ENCODE measurements at regions of chr12 and their contacts with region 1.

Region 1: GRCh38 chr12:55720894-55721444 is 776 bp downstream of the RDH5 start:
- DNase-seq: peak; percentile 95
- H3K4me3 ChIP-seq: peak overlapping the region in 3 of 4 donors; percentile 9 to 31 (median 22)
- H3K27ac ChIP-seq: peak overlapping the region; percentile 100
- H3K4me1 ChIP-seq: peaks cover 0 to 91% (median 90%) of the 10 kb centered on the region in 4 donors
- H3K27me3 ChIP-seq: no peaks in the 10 kb centered on the region
- CTCF ChIP-seq: peak in 3 of 4 experiments; percentile 48 to 64 (median 52)
- EP300 ChIP-seq: no peak
- POLR2A ChIP-seq: no peak

Region 2: DNA sequence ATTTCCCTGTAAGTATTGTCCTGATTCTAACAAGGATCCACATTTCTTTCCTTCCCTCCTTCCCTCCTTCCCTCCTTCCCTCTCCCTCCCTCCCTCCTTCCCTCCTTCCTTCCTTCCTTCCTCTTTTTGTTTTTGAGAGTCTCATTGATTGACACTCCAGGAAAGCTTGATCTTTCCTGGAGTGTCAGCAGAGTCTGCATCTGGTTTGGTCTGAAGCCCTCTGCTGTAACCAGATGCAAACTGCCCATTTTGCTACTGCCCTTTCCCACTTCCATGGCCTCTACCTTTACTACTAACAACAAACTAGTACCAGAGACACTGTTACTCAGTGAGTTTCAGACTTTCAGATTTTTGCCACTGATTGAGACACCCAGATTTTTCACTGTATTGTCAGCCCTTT is 335.1 kb before region 1 on chr12:
- intact Hi-C with region 1: no loop called
- DNase-seq: no peak
- H3K4me3 ChIP-seq: no peak overlapping the region
- H3K27ac ChIP-seq: no peak overlapping the region
- H3K4me1 ChIP-seq: no peaks in the 10 kb centered on the region
- H3K27me3 ChIP-seq: no peaks in the 10 kb centered on the region
- CTCF ChIP-seq: no peak
- EP300 ChIP-seq: no peak
- POLR2A ChIP-seq: no peak

Region 3: DNA sequence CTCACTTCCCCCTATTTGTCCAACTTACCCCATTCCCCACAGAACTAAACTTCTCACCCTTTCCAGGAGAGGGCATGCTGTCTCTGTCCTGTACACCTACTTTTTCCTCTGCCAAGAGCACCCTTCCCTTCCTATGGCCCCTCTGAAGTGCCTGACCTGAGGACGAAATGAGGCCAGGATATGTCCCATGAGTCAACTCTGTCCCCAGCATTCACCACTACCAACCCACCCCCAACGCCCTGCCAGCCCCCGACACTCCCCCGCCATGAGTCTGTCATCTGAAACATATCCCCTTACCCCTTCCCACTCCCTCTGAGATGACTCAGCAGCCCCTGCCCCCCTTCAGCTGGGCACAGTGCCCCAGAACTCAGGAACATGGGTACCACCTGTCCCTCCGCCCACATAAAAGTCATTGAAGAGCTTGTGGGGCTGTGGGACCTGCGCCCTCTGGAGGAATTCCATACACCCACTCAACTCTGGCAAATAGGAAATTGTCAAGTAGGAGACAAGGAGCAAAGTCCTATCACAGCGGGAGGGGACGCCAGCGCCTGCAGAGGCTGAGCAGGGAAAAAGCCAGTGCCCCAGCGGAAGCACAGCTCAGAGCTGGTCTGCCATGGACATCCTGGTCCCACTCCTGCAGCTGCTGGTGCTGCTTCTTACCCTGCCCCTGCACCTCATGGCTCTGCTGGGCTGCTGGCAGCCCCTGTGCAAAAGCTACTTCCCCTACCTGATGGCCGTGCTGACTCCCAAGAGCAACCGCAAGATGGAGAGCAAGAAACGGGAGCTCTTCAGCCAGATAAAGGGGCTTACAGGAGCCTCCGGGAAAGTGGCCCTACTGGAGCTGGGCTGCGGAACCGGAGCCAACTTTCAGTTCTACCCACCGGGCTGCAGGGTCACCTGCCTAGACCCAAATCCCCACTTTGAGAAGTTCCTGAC is 39.6 kb before region 1 on chr12:
- intact Hi-C with region 1: loop called (anchors 1 kb)
- DNase-seq: peak; percentile 81
- H3K4me3 ChIP-seq: peak overlapping the region in 1 of 4 donors; percentile 14
- H3K27ac ChIP-seq: peak overlapping the region; percentile 16 to 69 (median 62)
- H3K4me1 ChIP-seq: peaks cover 0 to 15% (median 11%) of the 10 kb centered on the region in 4 donors
- H3K27me3 ChIP-seq: no peaks in the 10 kb centered on the region
- CTCF ChIP-seq: peak in 3 of 4 experiments; percentile 28 to 48 (median 44)
- EP300 ChIP-seq: no peak
- POLR2A ChIP-seq: no peak

Region 4: DNA sequence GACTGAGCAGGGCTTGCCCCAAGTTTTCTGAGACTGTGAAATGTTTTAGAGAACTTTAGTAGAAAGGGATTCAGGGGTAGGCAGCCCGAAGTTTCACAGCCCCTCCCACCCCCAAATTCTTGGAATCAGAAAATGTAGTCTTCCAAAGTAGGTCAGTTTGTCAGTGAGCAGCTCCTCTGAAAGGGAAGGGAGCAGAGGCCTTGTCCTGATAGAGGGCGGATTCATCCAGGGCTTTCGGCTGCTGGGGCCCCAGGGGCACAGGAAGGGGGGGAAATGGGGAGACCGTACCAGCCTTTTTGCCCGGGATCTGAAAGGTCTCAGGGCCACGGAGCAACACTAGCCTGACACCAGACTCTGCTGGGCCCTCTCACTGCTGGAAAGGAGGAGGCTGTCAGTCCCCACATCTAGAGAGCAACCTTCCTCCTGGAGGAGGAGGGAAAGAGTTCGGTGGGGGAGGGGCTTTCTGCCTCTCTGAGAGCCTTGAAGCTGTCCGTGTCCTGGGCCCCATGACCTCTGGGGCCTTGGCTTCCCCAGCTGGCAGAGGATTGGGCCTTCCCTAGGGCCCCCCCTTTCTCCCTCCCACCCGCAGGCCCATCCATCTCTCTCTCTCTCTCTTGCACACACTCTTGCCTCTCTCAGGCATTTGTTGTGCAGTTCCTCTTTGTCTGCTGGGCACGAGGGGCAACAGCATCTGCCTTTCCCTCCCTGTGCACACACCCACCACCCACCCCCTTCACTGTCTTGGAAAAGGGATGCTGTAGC is 299.6 kb after region 1 on chr12 and contains the start of gene IKZF4:
- intact Hi-C with region 1: no loop called
- DNase-seq: peak; percentile 89
- H3K4me3 ChIP-seq: peak within 1 kb of the TSS; percentile 19 to 43 (median 36)
- H3K27ac ChIP-seq: peak within 1 kb of the TSS; percentile 70 to 79 (median 75)
- H3K4me1 ChIP-seq: peaks cover 0 to 28% (median 26%) of the 10 kb centered on the region in 4 donors
- H3K27me3 ChIP-seq: no peaks in the 10 kb centered on the region
- CTCF ChIP-seq: no peak
- EP300 ChIP-seq: no peak
- POLR2A ChIP-seq: no peak
- total RNA-seq, gene IKZF4: 2.3 to 23.8 (median 4.9) TPM

Measured in sigmoid colon (tissue), 7 donors.